Right ventricle myocardium inferior (tissue), 1 donor: ENCODE measurements at regions of chr20 and their contacts with region 1.

Region 1: GRCh38 chr20:18287915-18288748 is at the start of gene ZNF133:
- DNase-seq: peak; percentile 98
- ATAC-seq: peak; percentile 99
- total RNA-seq, gene ZNF133: 7.6 TPM

Region 2: GRCh38 chr20:17958373-17959256 is 329.5 kb before region 1 on chr20:
- intact Hi-C with region 1: no loop called
- DNase-seq: no peak
- ATAC-seq: no peak

Region 3: GRCh38 chr20:18137412-18138265 is 150.5 kb before region 1 on chr20 and contains the starts of genes KAT14 and PET117:
- intact Hi-C with region 1: loop called (anchors 5 kb)
- DNase-seq: peak; percentile 93
- ATAC-seq: peak; percentile 100
- total RNA-seq, gene KAT14: 10.7 TPM
- total RNA-seq, gene PET117: 13.3 TPM

Region 4: GRCh38 chr20:18466894-18467730 is 179.0 kb after region 1 on chr20 and contains the starts of genes DZANK1 and POLR3F:
- intact Hi-C with region 1: loop called (anchors 2 kb)
- DNase-seq: peak; percentile 98
- ATAC-seq: peak; percentile 100
- total RNA-seq, gene DZANK1: 1.1 TPM
- total RNA-seq, gene POLR3F: 7.7 TPM

Region 5: GRCh38 chr20:18507218-18508021 is 219.3 kb after region 1 on chr20 and contains the start of gene SEC23B:
- intact Hi-C with region 1: loop called (anchors 5 kb)
- DNase-seq: peak; percentile 98
- ATAC-seq: peak; percentile 99
- total RNA-seq, gene SEC23B: 8.9 TPM